Activated naive CD4-positive, alpha-beta T cell treated with anti-CD3 and anti-CD28 coated beads for 36 hours (primary cell): ENCODE measurements at regions of chr13 and their contacts with region 1.

Region 1: DNA sequence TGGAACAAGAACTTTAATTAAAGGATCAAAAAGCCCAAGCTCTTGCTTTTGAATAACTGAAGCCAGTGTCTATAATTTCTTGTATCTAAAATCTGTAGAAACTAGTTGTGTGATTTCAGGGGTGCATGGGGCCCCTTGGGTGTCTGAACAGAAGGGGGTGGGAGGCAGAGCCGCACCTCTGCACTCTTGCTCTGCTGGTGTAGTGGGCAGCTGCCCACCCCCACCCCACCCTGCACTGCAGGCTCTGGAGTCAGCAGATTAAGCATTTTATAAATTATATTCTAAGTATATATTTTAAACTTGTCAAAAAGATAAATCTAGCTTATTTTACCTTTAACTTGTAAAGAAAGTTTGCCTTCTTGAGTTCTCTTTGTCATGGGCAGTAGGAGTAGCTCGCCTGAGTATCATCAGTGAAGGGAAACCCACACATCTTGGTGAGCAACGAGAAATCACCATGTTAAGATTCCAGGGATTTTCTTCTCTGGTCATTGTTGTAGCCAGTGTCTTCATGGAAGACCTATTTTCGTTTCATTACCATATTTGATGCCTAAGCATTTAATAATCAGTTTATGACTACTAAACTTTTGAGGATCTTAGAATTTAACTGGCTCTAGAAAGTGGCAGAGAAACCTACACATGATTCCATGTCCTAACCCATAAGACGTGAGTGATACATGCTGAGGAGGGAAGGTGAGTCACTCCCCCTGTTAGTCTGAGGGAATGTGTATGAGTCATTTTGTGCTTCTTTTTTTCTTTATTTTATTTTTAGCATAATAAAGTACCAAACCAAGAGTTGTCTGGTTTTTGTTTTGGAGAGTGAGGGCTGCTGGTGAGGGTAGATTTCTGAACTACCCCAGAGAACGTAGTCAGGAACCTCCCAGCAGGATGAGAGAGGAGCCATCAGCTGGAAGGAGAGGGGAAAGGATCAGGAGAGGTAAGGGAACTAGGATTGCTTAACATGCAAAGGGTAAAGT is 7.7 kb downstream of the UBE2L5 start:
- DNase-seq: peak; percentile 53
- H3K4me3 Mint-ChIP-seq: peak overlapping the region; percentile 47
- H3K27ac Mint-ChIP-seq: peak overlapping the region; percentile 82
- H3K4me1 Mint-ChIP-seq: peaks cover 29% of the 10 kb centered on the region
- H3K27me3 Mint-ChIP-seq: no peaks in the 10 kb centered on the region

Region 2: DNA sequence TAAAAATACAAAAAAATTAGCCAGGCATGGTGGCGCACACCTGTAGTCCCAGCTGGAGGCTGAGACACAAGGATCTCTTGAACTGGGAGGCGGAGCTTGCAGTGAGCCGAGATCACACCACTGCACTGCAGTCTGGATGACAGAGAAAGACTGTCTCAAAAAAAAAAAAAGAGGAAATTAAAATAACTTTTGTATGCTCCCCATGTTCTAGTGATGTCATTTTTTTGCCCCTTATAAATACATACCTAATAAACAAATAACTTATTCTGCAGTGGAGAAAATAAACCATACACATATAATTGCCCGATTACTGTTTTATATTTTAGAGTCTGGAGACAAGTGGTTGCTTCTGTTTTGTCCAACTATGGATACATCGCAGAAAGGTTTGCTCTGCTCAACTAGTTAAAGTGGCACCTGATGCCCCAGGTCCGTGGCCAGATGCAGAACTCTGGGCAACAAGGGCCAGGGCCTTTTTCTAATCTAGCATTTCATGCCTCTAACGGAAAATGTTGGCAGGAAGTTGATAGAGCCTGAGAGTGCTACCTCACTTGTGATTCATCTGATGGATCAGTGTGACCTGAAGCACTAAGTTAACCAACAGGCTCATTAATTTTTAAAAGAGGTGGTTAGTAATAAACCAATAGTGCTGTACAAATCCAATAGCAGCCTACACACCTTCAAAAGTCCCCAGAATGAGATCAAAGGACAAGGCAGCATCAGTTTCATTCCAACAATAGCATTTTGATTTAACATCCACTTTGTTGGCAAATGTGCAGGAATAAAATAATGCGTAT is 11.1 kb after region 1 on chr13:
- CTCF ChIA-PET with region 1: no interaction called
- intact Hi-C with region 1: loop called (anchors 1 kb)
- DNase-seq: no peak
- H3K4me3 Mint-ChIP-seq: no peak overlapping the region
- H3K27ac Mint-ChIP-seq: no peak overlapping the region
- H3K4me1 Mint-ChIP-seq: peaks cover 11% of the 10 kb centered on the region
- H3K27me3 Mint-ChIP-seq: peaks cover 5% of the 10 kb centered on the region

Region 3: DNA sequence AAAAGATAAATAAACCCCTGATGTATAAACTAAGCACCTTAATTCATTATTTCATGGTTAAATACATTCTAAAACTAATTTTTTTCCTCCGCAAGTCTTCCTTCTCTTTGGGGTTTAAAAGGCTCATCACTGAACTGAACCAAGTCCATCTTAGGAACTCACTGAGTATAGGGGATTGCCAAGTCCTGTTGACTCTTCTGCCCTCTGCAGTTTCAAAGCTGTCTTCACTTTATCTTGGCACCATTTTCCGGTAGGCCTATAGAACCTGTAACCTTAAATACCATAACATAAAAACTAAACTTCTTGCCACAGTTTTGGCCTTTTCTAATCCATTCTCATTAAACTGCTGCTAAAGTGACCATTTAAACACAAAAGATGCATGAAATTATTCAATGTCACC is 121.2 kb after region 1 on chr13:
- CTCF ChIA-PET with region 1: no interaction called
- intact Hi-C with region 1: no loop called
- DNase-seq: peak; percentile 30
- H3K4me3 Mint-ChIP-seq: no peak overlapping the region
- H3K27ac Mint-ChIP-seq: no peak overlapping the region
- H3K4me1 Mint-ChIP-seq: peaks cover 2% of the 10 kb centered on the region
- H3K27me3 Mint-ChIP-seq: no peaks in the 10 kb centered on the region